Naive thymus-derived CD4-positive, alpha-beta T cell (primary cell): ENCODE measurements at regions of chr14 and their contacts with region 1.

Region 1: GRCh38 chr14:75141967-75142366 is 15.1 kb upstream of the NEK9 start:
- DNase-seq: peak in 7 of 9 donors; percentile 26 to 59 (median 47)
- ATAC-seq: peak; percentile 55
- H3K4me3 ChIP-seq: no peak overlapping the region
- H3K4me3 Mint-ChIP-seq: peak overlapping the region in 1 of 10 donors; percentile 47
- H3K27ac ChIP-seq: no peak overlapping the region
- H3K27ac Mint-ChIP-seq: peak overlapping the region in 8 of 9 donors; percentile 30 to 81 (median 56)
- H3K4me1 ChIP-seq: peaks cover 20 to 50% of the 10 kb centered on the region in 2 donors
- H3K4me1 Mint-ChIP-seq: peaks cover 52 to 86% (median 74%) of the 10 kb centered on the region in 7 donors
- H3K27me3 ChIP-seq: no peaks in the 10 kb centered on the region
- H3K27me3 Mint-ChIP-seq: no peaks in the 10 kb centered on the region

Region 2: GRCh38 chr14:75002392-75003249 is 139.3 kb before region 1 on chr14 and contains the start of gene EIF2B2:
- CTCF ChIA-PET with region 1: no interaction called
- POLR2A ChIA-PET with region 1: no interaction called
- intact Hi-C with region 1: no loop called
- DNase-seq: peak; percentile 90 to 100 (median 99)
- ATAC-seq: peak; percentile 97
- H3K4me3 ChIP-seq: peak within 1 kb of the TSS; percentile 93
- H3K4me3 Mint-ChIP-seq: peak within 1 kb of the TSS; percentile 78 to 99 (median 94)
- H3K27ac ChIP-seq: peak within 1 kb of the TSS; percentile 91
- H3K27ac Mint-ChIP-seq: peak within 1 kb of the TSS; percentile 95 to 100 (median 97)
- H3K4me1 ChIP-seq: peaks cover 15 to 23% of the 10 kb centered on the region in 2 donors
- H3K4me1 Mint-ChIP-seq: peaks cover 23 to 50% (median 44%) of the 10 kb centered on the region in 7 donors
- H3K27me3 ChIP-seq: no peaks in the 10 kb centered on the region
- H3K27me3 Mint-ChIP-seq: peaks cover 0 to 5% (median 0%) of the 10 kb centered on the region in 5 donors
- total RNA-seq, gene EIF2B2: 23.8 to 40.7 (median 26.1) TPM

Region 3: GRCh38 chr14:75158843-75159614 is 17.1 kb after region 1 on chr14:
- CTCF ChIA-PET with region 1: interaction called, 3 read pairs
- POLR2A ChIA-PET with region 1: interaction called, 3 read pairs
- intact Hi-C with region 1: loop called (anchors 2 kb)
- DNase-seq: no peak
- ATAC-seq: no peak
- H3K4me3 ChIP-seq: no peak overlapping the region
- H3K4me3 Mint-ChIP-seq: no peak overlapping the region
- H3K27ac ChIP-seq: no peak overlapping the region
- H3K27ac Mint-ChIP-seq: peak overlapping the region in 3 of 9 donors; percentile 43 to 64 (median 52)
- H3K4me1 ChIP-seq: peaks cover 12 to 20% of the 10 kb centered on the region in 2 donors
- H3K4me1 Mint-ChIP-seq: peaks cover 34 to 74% (median 65%) of the 10 kb centered on the region in 7 donors
- H3K27me3 ChIP-seq: no peaks in the 10 kb centered on the region
- H3K27me3 Mint-ChIP-seq: no peaks in the 10 kb centered on the region

Region 4: DNA sequence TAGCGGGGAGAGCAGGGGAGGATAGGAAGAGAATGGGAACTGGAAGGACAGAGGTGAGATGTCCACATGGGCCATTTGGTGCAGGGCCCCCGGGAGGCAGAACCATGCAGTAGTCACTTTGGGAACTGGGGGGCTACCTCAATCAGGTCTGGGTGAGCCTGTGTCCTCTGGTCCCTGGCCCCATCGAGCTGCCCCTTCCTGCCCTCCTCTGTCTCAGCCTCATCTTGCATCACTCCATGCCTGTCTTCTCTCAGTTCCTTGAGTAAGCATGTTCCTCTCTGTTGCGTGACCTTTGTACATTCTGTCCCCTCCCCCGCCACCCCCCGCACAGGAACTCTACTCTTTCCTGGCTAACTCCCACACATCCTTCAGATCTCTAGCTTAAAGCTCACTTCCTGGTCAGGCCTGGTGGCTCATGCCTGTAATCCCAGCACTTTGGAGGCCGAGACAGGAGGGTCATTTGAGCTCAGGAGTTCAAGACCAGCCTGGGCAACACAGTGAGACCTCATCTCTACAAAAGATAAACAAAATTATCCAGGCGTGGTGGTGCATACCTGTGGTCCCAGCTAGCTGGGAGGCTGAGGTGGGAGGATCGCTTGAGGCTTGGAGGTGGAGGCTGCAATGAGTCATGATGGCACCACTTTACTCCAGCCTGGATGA is 159.8 kb after region 1 on chr14:
- CTCF ChIA-PET with region 1: interaction called, 40 read pairs
- POLR2A ChIA-PET with region 1: interaction called, 4 read pairs
- intact Hi-C with region 1: loop called in 1 of 2 experiments (anchors 1 kb)
- DNase-seq: peak in 1 of 9 donors; percentile 40
- ATAC-seq: peak; percentile 45
- H3K4me3 ChIP-seq: no peak overlapping the region
- H3K4me3 Mint-ChIP-seq: peak overlapping the region in 3 of 10 donors; percentile 17 to 48 (median 41)
- H3K27ac ChIP-seq: no peak overlapping the region
- H3K27ac Mint-ChIP-seq: peak overlapping the region in 7 of 9 donors; percentile 24 to 82 (median 38)
- H3K4me1 ChIP-seq: peaks cover 0 to 9% of the 10 kb centered on the region in 2 donors
- H3K4me1 Mint-ChIP-seq: peaks cover 15 to 26% (median 22%) of the 10 kb centered on the region in 7 donors
- H3K27me3 ChIP-seq: no peaks in the 10 kb centered on the region
- H3K27me3 Mint-ChIP-seq: peaks cover 0 to 6% (median 0%) of the 10 kb centered on the region in 5 donors

Region 5: GRCh38 chr14:75720842-75721498 is 579.0 kb after region 1 on chr14:
- CTCF ChIA-PET with region 1: no interaction called
- POLR2A ChIA-PET with region 1: no interaction called
- intact Hi-C with region 1: no loop called
- DNase-seq: no peak
- ATAC-seq: no peak
- H3K4me3 ChIP-seq: no peak overlapping the region
- H3K4me3 Mint-ChIP-seq: no peak overlapping the region
- H3K27ac ChIP-seq: no peak overlapping the region
- H3K27ac Mint-ChIP-seq: no peak overlapping the region
- H3K4me1 ChIP-seq: no peaks in the 10 kb centered on the region
- H3K4me1 Mint-ChIP-seq: peaks cover 0 to 22% (median 0%) of the 10 kb centered on the region in 7 donors
- H3K27me3 ChIP-seq: no peaks in the 10 kb centered on the region
- H3K27me3 Mint-ChIP-seq: no peaks in the 10 kb centered on the region